ENCODE measurements at regions of chr11 and their contacts with region 1.

Region 1: GRCh38 chr11:32052218-32052617 is 38.7 kb upstream of the RCN1 start:
- DNase-seq: peak; percentile 42
- H3K4me3 ChIP-seq: no peak overlapping the region
- H3K27ac ChIP-seq: no peak overlapping the region
- H3K4me1 ChIP-seq: no peaks in the 10 kb centered on the region
- CTCF ChIP-seq: peak; percentile 85

Region 2: GRCh38 chr11:31757260-31757835 is 294.9 kb before region 1 on chr11:
- CTCF ChIA-PET with region 1: no interaction called
- POLR2A ChIA-PET with region 1: no interaction called
- intact Hi-C with region 1: no loop called
- DNase-seq: no peak
- H3K4me3 ChIP-seq: no peak overlapping the region
- H3K27ac ChIP-seq: no peak overlapping the region
- H3K4me1 ChIP-seq: no peaks in the 10 kb centered on the region
- CTCF ChIP-seq: no peak

Region 3: DNA sequence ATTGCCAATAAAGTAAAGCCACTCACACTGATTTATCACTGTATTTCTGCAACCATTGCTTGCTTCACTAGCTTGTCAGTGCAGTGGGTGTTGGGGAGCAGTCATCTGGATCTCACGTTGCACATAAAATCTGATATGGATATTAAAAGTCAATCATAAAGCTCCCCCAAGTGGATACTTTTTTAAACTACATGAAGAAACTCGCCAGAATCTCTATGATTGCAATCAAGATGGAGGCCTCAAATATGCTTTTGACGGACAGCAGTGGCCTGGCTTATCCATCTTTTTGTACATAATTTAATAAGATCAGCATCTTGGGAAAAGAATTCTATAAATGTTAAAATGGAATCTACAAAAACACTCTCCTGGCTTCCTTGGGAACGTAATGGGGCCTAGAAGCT is 245.4 kb after region 1 on chr11:
- CTCF ChIA-PET with region 1: no interaction called
- POLR2A ChIA-PET with region 1: no interaction called
- intact Hi-C with region 1: loop called (anchors 2 kb)
- DNase-seq: peak; percentile 34
- H3K4me3 ChIP-seq: no peak overlapping the region
- H3K27ac ChIP-seq: no peak overlapping the region
- H3K4me1 ChIP-seq: no peaks in the 10 kb centered on the region
- CTCF ChIP-seq: peak; percentile 73

Measured in OCI-LY7 (cell line).